Posterior vena cava (tissue), 2 donors: ENCODE measurements at regions of chr15 and their contacts with region 1.

Region 1: GRCh38 chr15:87998630-87999029 is 257.9 kb downstream of the NTRK3 start:
- DNase-seq: no peak

Region 2: GRCh38 chr15:87917480-87917879 is 81.2 kb before region 1 on chr15:
- intact Hi-C with region 1: loop called in 1 of 2 experiments (anchors 2 kb)
- DNase-seq: no peak